ENCODE measurements at regions of chr5 and their contacts with region 1.

Region 1: GRCh38 chr5:135466178-135467050 is 14.3 kb upstream of the TIFAB start:
- DNase-seq: peak; percentile 58
- H3K4me3 ChIP-seq: no peak overlapping the region
- H3K27ac ChIP-seq: no peak overlapping the region
- H3K4me1 ChIP-seq: no peaks in the 10 kb centered on the region
- H3K27me3 ChIP-seq: no peaks in the 10 kb centered on the region
- CTCF ChIP-seq: peak; percentile 49 to 91 (median 80)
- POLR2A ChIP-seq: no peak

Region 2: GRCh38 chr5:135127505-135128239 is 338.7 kb before region 1 on chr5:
- intact Hi-C with region 1: no loop called
- DNase-seq: no peak
- H3K4me3 ChIP-seq: no peak overlapping the region
- H3K27ac ChIP-seq: no peak overlapping the region
- H3K4me1 ChIP-seq: no peaks in the 10 kb centered on the region
- H3K27me3 ChIP-seq: no peaks in the 10 kb centered on the region
- CTCF ChIP-seq: no peak
- POLR2A ChIP-seq: no peak

Region 3: DNA sequence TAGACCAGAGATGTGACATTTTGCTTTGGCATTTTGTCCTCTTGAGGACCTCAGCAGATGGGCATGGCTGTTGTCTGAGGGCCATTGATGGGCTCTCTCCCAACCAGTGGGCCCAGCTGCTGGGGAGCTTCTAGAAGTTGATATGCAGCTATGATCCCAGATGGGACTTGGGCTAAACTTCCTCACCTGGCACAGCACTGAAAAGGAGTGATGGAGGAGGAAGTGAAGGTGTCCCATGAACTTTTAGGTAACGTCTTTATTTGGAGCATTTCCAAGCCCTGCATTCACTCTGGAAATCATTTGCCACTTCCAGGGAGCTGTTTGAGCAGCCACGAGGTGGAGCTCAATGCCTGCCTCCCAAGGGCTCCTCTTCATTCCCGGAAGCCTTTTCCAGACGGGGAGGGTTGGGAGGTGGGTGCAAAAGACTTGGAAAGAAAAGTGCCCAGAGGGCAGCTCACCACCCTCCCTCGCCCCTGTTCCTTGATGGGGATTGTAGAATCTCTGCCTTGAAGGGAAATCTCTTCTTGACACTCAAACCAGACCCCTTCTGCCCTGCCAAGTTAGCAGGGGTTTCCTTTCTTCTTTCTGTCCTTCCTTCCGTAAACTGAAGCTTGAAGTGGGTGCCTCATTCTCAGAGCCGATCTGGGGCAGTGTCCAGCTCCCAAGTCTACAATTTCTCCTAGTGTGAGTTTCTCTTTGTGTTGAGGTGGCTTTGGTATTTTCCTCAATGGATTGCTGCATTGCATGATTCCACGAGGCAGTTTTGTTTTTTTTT is 87.5 kb after region 1 on chr5:
- intact Hi-C with region 1: loop called (anchors 1 kb)
- DNase-seq: no peak
- H3K4me3 ChIP-seq: no peak overlapping the region
- H3K27ac ChIP-seq: no peak overlapping the region
- H3K4me1 ChIP-seq: no peaks in the 10 kb centered on the region
- H3K27me3 ChIP-seq: peaks cover 3% of the 10 kb centered on the region
- CTCF ChIP-seq: peak in 2 of 4 experiments; percentile 6 to 16
- POLR2A ChIP-seq: no peak